ENCODE measurements at regions of chr4 and their contacts with region 1.

Region 1: GRCh38 chr4:94221916-94222315 is 14.3 kb downstream of the SMARCAD1 start:
- DNase-seq: no peak
- H3K4me3 ChIP-seq: no peak overlapping the region
- H3K27ac ChIP-seq: no peak overlapping the region
- H3K4me1 ChIP-seq: no peaks in the 10 kb centered on the region
- H3K27me3 ChIP-seq: no peaks in the 10 kb centered on the region
- CTCF ChIP-seq: no peak
- EP300 ChIP-seq: no peak
- POLR2A ChIP-seq: no peak

Region 2: GRCh38 chr4:93879919-93880318 is 342.0 kb before region 1 on chr4:
- intact Hi-C with region 1: no loop called
- DNase-seq: no peak
- H3K4me3 ChIP-seq: no peak overlapping the region
- H3K27ac ChIP-seq: no peak overlapping the region
- H3K4me1 ChIP-seq: no peaks in the 10 kb centered on the region
- H3K27me3 ChIP-seq: no peaks in the 10 kb centered on the region
- CTCF ChIP-seq: no peak
- EP300 ChIP-seq: no peak
- POLR2A ChIP-seq: no peak

Region 3: GRCh38 chr4:94605241-94605805 is 383.4 kb after region 1 on chr4:
- intact Hi-C with region 1: loop called in 1 of 4 experiments (anchors 5 kb)
- DNase-seq: no peak
- H3K4me3 ChIP-seq: no peak overlapping the region
- H3K27ac ChIP-seq: no peak overlapping the region
- H3K4me1 ChIP-seq: peaks cover 2% of the 10 kb centered on the region
- H3K27me3 ChIP-seq: no peaks in the 10 kb centered on the region
- CTCF ChIP-seq: no peak
- EP300 ChIP-seq: no peak
- POLR2A ChIP-seq: no peak